ENCODE measurements at regions of chr7 and their contacts with region 1.

Region 1: DNA sequence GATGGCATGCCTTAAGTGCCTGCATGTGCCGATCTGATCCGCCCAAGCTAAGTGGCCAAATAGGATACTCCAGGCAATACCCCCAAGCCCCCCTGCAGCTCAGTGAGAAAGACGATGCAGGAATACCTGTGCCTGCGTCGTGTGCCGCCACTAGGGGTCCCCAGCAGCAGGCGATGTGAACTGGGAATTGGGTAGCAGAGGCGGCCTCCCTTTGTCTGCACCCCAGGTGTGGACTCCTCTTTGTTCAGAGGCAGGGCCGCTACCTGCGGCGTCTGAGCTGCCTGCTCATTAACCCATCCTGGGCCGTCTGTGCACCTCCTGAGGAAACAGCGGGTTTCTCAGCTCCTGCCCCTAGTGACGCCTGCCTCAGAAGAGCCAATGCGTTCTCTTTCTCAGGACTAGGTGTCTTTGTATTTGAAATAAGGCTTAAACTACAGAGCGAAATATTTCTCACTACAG is 4.8 kb upstream of the CHN2 start:
- DNase-seq: peak; percentile 34
- H3K4me3 ChIP-seq: no peak overlapping the region
- H3K27ac ChIP-seq: no peak overlapping the region
- H3K4me1 ChIP-seq: peaks cover 4% of the 10 kb centered on the region
- H3K27me3 ChIP-seq: peaks cover 2% of the 10 kb centered on the region
- CTCF ChIP-seq: peak; percentile 83 to 92

Region 2: GRCh38 chr7:29113384-29114103 is 76.2 kb before region 1 on chr7:
- CTCF ChIA-PET with region 1: no interaction called
- dilution Hi-C with region 1: no loop called
- in situ Hi-C with region 1: no loop called
- intact Hi-C with region 1: loop called (anchors 5 kb)
- DNase-seq: peak; percentile 91
- H3K4me3 ChIP-seq: peak overlapping the region in 1 of 3 experiments; percentile 32
- H3K27ac ChIP-seq: peak overlapping the region; percentile 53
- H3K4me1 ChIP-seq: peaks cover 54% of the 10 kb centered on the region
- H3K27me3 ChIP-seq: no peaks in the 10 kb centered on the region
- CTCF ChIP-seq: peak; percentile 44 to 58

Region 3: GRCh38 chr7:29217113-29217512 is 27.3 kb after region 1 on chr7:
- CTCF ChIA-PET with region 1: no interaction called
- dilution Hi-C with region 1: no loop called
- in situ Hi-C with region 1: no loop called
- intact Hi-C with region 1: no loop called
- DNase-seq: no peak
- H3K4me3 ChIP-seq: no peak overlapping the region
- H3K27ac ChIP-seq: no peak overlapping the region
- H3K4me1 ChIP-seq: no peaks in the 10 kb centered on the region
- H3K27me3 ChIP-seq: no peaks in the 10 kb centered on the region
- CTCF ChIP-seq: no peak

Region 4: GRCh38 chr7:29309041-29309854 is 119.5 kb after region 1 on chr7:
- CTCF ChIA-PET with region 1: no interaction called
- dilution Hi-C with region 1: no loop called
- in situ Hi-C with region 1: no loop called
- intact Hi-C with region 1: loop called (anchors 1 kb)
- DNase-seq: no peak
- H3K4me3 ChIP-seq: no peak overlapping the region
- H3K27ac ChIP-seq: no peak overlapping the region
- H3K4me1 ChIP-seq: peaks cover 22% of the 10 kb centered on the region
- H3K27me3 ChIP-seq: no peaks in the 10 kb centered on the region
- CTCF ChIP-seq: peak in 1 of 2 donors; percentile 13

Region 5: DNA sequence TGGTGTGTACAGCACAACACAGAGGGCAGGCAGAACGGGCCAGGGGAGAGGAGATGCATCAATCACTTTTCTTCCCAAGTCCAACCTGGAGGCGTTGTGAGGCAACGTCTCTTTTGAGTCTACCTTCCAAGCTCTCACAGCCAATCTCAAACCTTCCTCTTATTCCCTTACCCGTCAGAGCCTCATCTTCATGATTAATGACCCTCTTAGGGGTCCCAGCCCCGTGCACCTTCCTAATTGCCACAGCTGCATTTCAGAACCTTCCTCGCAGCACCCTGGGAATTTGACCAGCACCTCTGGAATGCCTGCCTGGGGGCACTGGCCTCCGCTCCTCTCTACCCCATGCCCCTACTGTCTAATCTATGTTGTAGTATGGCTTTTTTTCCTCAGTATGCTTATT is 204.5 kb after region 1 on chr7:
- CTCF ChIA-PET with region 1: no interaction called
- dilution Hi-C with region 1: no loop called
- in situ Hi-C with region 1: no loop called
- intact Hi-C with region 1: loop called (anchors 5 kb)
- DNase-seq: no peak
- H3K4me3 ChIP-seq: no peak overlapping the region
- H3K27ac ChIP-seq: no peak overlapping the region
- H3K4me1 ChIP-seq: no peaks in the 10 kb centered on the region
- H3K27me3 ChIP-seq: peaks cover 8% of the 10 kb centered on the region
- CTCF ChIP-seq: no peak